ENCODE measurements at regions of chr10 and their contacts with region 1.

Region 1: DNA sequence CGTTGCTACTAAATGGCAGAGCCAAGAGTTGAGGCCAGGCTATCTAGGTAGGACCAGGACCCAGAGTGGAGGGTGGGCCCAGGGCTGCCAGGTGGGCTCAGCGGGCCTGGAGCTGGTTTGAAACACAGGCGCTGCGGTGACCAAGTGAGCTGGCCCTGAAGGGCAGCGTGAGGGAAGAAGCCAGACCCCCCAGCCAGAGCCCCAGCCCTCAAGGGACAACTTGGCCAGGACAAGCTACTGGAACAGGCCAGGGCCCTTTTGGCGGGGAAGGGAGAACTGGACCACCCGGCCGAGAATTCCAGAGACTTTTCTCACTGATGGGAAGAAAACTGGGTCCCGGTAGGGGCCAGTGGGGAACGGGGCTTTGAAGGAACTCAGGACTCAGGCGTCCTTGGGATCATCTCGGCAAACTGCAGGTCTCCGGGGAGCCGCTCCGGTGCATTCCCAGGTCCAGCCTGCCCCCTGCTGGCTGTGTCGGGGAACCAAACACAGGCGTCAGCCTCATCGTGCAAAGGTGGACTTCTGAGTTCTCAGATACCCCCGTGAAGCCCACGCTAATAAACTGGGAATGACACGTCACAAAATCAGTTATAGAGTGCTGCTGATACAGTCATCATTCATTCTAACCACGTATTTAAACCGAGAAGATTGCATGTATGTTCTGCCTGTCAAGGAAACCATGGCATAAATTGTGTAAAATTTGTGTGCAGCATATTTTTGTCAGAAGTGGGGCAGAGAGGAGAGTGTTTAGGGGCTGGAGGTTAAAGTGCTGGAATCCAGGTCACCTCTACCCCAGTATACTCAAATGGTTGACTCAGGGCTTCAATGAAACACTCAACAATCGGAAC is 76.0 kb upstream of the CPXM2 start:
- DNase-seq: peak; percentile 49
- ATAC-seq: peak; percentile 96
- H3K4me3 ChIP-seq: no peak overlapping the region
- H3K27ac ChIP-seq: no peak overlapping the region
- H3K4me1 ChIP-seq: peaks cover 0 to 10% of the 10 kb centered on the region in 2 experiments; a peak in 1 of 4 replicates
- H3K27me3 ChIP-seq: peaks cover 21% of the 10 kb centered on the region
- CTCF ChIP-seq: peak; percentile 96 to 99 (median 99)
- POLR2A ChIP-seq: no peak
- RAD21 ChIP-seq: peak; percentile 99

Region 2: DNA sequence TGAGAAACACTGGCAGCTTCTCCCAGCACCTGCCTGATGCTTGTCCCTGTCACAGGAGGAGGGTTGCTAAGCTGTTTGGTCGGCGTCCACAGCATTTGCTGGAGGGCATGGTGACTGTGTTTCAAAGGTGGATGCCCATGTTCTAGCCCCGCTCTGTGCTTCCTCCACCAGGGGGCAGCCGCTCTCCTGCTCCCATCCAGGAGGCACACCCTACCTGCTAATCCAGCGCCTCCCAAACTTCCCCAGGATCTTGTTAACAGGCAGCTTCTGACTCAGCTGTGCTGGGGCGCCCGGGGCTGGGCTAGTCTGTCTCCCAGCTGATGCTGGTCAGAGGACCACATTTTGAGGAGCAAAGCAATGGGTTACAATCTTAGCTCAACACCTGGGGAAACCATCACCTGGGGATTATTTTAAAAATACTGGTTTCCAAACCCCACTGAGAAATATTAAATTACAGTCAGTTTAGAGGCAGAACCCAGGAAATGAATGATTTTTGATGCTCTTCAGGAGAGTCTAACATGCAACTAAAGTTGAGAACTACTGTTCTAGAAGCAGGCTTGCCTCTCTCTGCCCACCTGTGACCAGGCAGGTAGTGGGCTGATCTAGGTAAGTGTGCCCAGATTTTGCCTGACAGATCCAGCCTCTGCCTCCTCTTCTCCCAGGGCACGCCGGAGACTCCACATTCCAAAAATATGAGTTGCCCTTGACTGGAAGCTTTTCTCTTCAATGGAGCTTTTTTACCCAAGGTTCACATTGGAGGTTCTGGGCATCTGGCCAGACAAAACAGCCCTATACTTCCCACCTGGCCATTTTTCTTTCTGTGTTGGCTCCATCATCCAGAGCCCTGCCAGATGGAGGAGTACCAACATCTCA is 394.1 kb before region 1 on chr10:
- CTCF ChIA-PET with region 1: interaction called, 16 read pairs
- POLR2A ChIA-PET with region 1: no interaction called
- RAD21 ChIA-PET with region 1: no interaction called
- intact Hi-C with region 1: loop called (anchors 2 kb)
- DNase-seq: peak; percentile 83
- ATAC-seq: peak; percentile 97
- H3K4me3 ChIP-seq: peak overlapping the region in 1 of 2 experiments; percentile 23; a peak in 2 of 4 replicates
- H3K27ac ChIP-seq: peak overlapping the region; percentile 8; the same call in 1 of the 2 replicates
- H3K4me1 ChIP-seq: peaks cover 11 to 20% of the 10 kb centered on the region in 2 experiments
- H3K27me3 ChIP-seq: peaks cover 19% of the 10 kb centered on the region; the same call in 1 of the 2 replicates
- CTCF ChIP-seq: peak; percentile 89 to 99 (median 98)
- POLR2A ChIP-seq: no peak
- RAD21 ChIP-seq: peak; percentile 83

Region 3: DNA sequence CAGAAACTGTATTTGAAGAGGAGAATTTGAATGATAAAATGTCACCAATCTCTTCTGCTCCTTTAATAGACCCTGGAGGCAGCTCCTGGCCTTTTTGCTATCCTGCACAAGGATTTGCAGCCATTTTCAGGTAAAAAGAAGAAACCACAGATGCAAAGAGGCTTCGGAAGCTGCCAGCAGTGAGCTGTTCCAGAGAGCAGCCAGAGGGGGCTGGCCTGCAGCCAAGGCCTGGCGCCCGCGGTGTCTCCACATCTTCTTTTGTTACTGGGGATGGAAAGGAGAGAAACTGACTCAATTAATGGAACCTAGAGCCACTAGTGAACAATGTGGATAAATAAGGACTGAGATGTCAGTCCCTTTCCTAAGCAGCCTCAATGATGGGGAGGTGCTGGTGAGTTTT is 325.3 kb before region 1 on chr10:
- CTCF ChIA-PET with region 1: no interaction called
- POLR2A ChIA-PET with region 1: no interaction called
- RAD21 ChIA-PET with region 1: no interaction called
- intact Hi-C with region 1: loop called (anchors 10 kb)
- DNase-seq: no peak
- ATAC-seq: no peak; the same call in 1 of the 2 replicates
- H3K4me3 ChIP-seq: no peak overlapping the region
- H3K27ac ChIP-seq: no peak overlapping the region
- H3K4me1 ChIP-seq: peaks cover under 1 to 14% of the 10 kb centered on the region in 2 experiments; a peak in 3 of 4 replicates
- H3K27me3 ChIP-seq: peaks cover 29% of the 10 kb centered on the region
- CTCF ChIP-seq: no peak
- POLR2A ChIP-seq: no peak
- RAD21 ChIP-seq: no peak

Region 4: GRCh38 chr10:123870260-123870659 is 97.4 kb before region 1 on chr10:
- CTCF ChIA-PET with region 1: no interaction called
- POLR2A ChIA-PET with region 1: no interaction called
- RAD21 ChIA-PET with region 1: no interaction called
- intact Hi-C with region 1: loop called (anchors 5 kb)
- DNase-seq: no peak
- ATAC-seq: no peak
- H3K4me3 ChIP-seq: no peak overlapping the region
- H3K27ac ChIP-seq: no peak overlapping the region
- H3K4me1 ChIP-seq: no peaks in the 10 kb centered on the region; a peak in 1 of 4 replicates
- H3K27me3 ChIP-seq: peaks cover 40% of the 10 kb centered on the region
- CTCF ChIP-seq: no peak
- POLR2A ChIP-seq: no peak
- RAD21 ChIP-seq: no peak